AG04449 (cell line): ENCODE measurements at regions of chr3 and their contacts with region 1.

Region 1: GRCh38 chr3:45760878-45761711 is 35.2 kb downstream of the SLC6A20 start:
- DNase-seq: peak; percentile 3
- H3K4me3 ChIP-seq: no peak overlapping the region
- CTCF ChIP-seq: peak; percentile 90

Region 2: DNA sequence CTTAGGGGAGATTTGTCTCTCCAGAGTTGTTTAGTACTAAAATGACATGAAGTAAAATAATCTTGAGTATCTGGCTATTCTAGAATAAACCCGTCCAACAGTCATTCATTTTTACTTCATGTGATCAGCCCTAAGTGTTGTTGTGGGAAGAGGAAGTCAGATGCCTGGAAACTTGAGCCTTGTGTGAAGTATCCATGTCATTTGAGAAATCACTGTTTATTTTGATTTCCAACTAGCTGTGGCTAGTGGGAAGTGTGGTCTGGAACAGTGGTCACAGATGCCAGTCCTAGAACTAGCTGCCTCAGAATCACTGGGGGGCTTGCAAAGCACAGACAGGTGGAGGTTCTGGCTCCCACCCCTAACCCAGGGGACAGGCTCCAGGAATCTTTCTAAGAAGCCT is 244.3 kb before region 1 on chr3:
- CTCF ChIA-PET with region 1: no interaction called
- POLR2A ChIA-PET with region 1: no interaction called
- DNase-seq: no peak
- H3K4me3 ChIP-seq: no peak overlapping the region
- CTCF ChIP-seq: no peak

Region 3: GRCh38 chr3:45746777-45747622 is 14.1 kb before region 1 on chr3:
- CTCF ChIA-PET with region 1: interaction called, 53 read pairs
- POLR2A ChIA-PET with region 1: no interaction called
- DNase-seq: no peak
- H3K4me3 ChIP-seq: no peak overlapping the region
- CTCF ChIP-seq: no peak

Region 4: GRCh38 chr3:45832691-45833090 is 71.6 kb after region 1 on chr3:
- CTCF ChIA-PET with region 1: interaction called, 65 read pairs
- POLR2A ChIA-PET with region 1: no interaction called
- DNase-seq: no peak
- H3K4me3 ChIP-seq: no peak overlapping the region
- CTCF ChIP-seq: peak; percentile 7

Region 5: DNA sequence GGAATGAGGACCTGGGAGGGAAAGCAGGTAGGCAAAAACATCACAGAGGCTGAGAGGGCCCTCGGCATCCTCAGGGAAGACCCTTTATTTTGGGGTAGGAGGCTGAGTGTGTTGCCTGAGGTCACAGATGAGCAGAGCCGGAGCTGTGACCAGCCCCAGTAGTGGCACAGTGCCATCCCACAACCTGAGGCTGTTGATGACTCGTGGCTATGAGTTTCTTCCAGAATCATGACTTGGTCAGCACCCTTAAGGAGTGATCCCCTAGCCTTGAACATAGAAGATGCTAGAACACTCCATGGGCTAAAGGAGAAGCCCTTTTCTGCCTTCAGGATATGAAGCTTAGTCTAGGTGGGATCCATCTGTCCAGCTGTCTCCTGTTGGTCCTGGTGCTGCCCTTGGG is 162.7 kb after region 1 on chr3:
- CTCF ChIA-PET with region 1: interaction called, 139 read pairs
- POLR2A ChIA-PET with region 1: no interaction called
- DNase-seq: no peak
- H3K4me3 ChIP-seq: no peak overlapping the region
- CTCF ChIP-seq: no peak

Region 6: DNA sequence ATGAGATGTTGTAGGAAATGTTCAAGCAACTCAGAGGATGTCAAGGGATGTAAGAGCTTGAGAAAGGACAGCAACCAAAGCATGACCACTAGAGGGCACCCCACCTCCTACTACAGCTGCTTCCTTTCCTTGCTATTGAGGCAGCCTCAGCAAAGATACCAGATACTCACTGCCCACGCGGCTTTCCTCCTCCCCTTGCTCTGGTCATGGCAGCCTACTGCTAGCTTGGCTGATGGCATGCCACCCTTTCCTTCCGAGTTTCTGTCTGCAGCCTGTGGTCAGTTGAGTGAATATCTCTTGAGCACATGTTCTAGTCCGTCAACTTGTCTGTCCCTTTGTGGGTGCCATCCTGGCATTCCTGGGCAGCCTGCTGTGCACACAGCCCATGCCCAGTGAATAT is 177.8 kb after region 1 on chr3:
- CTCF ChIA-PET with region 1: interaction called, 31 read pairs
- POLR2A ChIA-PET with region 1: no interaction called
- DNase-seq: peak; percentile 69
- H3K4me3 ChIP-seq: no peak overlapping the region
- CTCF ChIP-seq: peak; percentile 93